ENCODE measurements at regions of chr11 and their contacts with region 1.

Region 1: GRCh38 chr11:41431784-41432183 is 27.7 kb downstream of the LRRC4C start:
- DNase-seq: no peak

Region 2: GRCh38 chr11:41245702-41246398 is 185.9 kb before region 1 on chr11:
- intact Hi-C with region 1: loop called (anchors 5 kb)
- DNase-seq: no peak